Body of pancreas (tissue), 4 donors: ENCODE measurements at regions of chr2 and their contacts with region 1.

Region 1: GRCh38 chr2:197191177-197191939 is 119.2 kb downstream of the ANKRD44 start:
- DNase-seq: no peak
- ATAC-seq: peak; percentile 62
- H3K4me3 ChIP-seq: no peak overlapping the region
- H3K27ac ChIP-seq: no peak overlapping the region
- H3K4me1 ChIP-seq: no peaks in the 10 kb centered on the region
- H3K27me3 ChIP-seq: no peaks in the 10 kb centered on the region
- CTCF ChIP-seq: peak; percentile 38 to 86 (median 75)
- POLR2A ChIP-seq: no peak

Region 2: GRCh38 chr2:197042739-197043196 is 148.6 kb before region 1 on chr2:
- intact Hi-C with region 1: no loop called
- DNase-seq: no peak
- ATAC-seq: no peak
- H3K4me3 ChIP-seq: no peak overlapping the region
- H3K27ac ChIP-seq: no peak overlapping the region
- H3K4me1 ChIP-seq: no peaks in the 10 kb centered on the region
- H3K27me3 ChIP-seq: no peaks in the 10 kb centered on the region
- CTCF ChIP-seq: no peak
- POLR2A ChIP-seq: no peak

Region 3: GRCh38 chr2:197075759-197076337 is 115.5 kb before region 1 on chr2:
- intact Hi-C with region 1: no loop called
- DNase-seq: no peak
- ATAC-seq: no peak
- H3K4me3 ChIP-seq: no peak overlapping the region
- H3K27ac ChIP-seq: no peak overlapping the region
- H3K4me1 ChIP-seq: no peaks in the 10 kb centered on the region
- H3K27me3 ChIP-seq: no peaks in the 10 kb centered on the region
- CTCF ChIP-seq: peak in 3 of 7 experiments; percentile 4 to 23 (median 12)
- POLR2A ChIP-seq: no peak

Region 4: DNA sequence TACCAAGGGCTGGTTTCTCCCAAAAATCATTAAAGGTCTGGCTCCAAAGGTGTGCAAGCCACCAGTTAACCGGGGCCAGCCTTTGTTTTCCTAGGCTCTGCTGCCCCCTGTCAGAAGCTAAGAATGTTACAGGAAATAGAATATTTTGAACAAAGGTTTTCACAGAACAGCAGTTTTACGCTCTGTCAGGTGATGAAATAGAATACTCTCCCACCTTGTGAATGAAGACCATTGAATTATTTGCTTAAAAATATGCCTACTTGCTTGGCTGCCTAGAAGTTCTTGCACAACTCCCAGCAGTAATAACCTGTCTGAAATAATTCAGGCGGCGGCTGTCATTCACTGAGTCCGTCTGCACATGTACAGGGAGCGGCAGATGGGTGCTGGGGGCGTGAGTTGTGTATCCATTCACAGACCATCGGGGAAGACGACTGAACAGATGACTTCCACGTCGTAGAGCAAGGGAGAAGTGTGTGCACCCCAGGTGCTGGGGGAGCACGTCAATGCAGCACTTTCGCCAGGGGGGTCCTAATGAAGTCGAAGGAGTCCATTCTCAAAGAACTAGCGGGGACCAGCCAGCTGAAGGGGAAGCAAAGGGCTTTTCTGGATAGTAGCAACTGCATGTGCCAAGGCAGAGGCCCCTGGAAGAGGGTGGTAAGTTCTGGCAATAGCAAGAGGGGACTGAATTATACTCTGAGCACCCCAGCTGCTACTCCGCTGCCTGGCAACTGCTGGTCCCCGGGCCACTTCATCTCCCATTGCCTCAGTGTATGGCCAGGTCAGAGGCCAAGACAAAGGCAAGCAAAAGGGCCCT is 187.3 kb after region 1 on chr2:
- intact Hi-C with region 1: loop called (anchors 5 kb)
- DNase-seq: peak; percentile 49 to 62 (median 58)
- ATAC-seq: peak; percentile 87
- H3K4me3 ChIP-seq: no peak overlapping the region
- H3K27ac ChIP-seq: no peak overlapping the region
- H3K4me1 ChIP-seq: no peaks in the 10 kb centered on the region
- H3K27me3 ChIP-seq: no peaks in the 10 kb centered on the region
- CTCF ChIP-seq: peak; percentile 54 to 88 (median 77)
- POLR2A ChIP-seq: no peak